ENCODE measurements at regions of chr2 and their contacts with region 1.

Region 1: DNA sequence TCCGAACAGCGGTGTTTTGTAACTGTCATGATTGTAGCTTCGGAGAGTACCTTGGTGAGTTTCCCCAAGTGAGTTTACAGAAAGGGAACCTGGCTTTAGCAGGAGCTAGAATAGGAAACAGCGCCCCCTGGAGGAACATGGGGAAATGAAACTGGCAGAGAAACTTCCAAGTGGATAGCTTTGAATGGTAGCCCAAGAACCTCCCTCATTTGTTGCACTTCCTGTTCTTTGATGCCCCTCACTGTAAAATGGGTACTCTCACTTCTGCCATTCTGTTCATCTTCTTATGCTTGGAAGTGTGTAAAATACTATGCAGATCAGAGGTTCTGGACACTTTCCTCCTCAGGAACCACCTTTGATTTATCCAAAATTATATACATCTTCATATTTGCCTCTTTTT is 36.2 kb downstream of the CHST10 start:
- DNase-seq: peak; percentile 41 to 58
- ATAC-seq: peak; percentile 54 to 75
- H3K4me3 ChIP-seq: no peak overlapping the region
- H3K27ac ChIP-seq: no peak overlapping the region
- H3K4me1 ChIP-seq: no peaks in the 10 kb centered on the region
- H3K27me3 ChIP-seq: no peaks in the 10 kb centered on the region
- CTCF ChIP-seq: peak; percentile 60 to 88 (median 78)
- POLR2A ChIP-seq: no peak

Region 2: DNA sequence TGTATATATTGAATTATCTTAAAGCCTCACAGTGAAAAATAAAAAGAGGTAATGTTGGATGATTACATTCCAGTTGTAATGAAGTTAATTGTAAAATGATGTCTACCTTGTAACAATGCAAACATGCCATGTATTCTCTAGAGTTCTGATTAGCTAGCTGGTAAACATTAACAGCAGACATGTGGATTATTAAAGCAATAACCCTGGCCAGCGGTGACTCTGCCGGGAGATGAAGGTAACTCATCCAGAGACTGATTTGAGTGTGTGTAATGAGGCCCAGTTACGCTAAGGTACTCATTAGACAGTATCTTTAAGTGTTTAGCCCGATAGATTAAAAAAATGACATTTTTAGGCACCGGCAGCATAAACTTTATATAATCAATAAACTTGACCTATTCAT is 811.9 kb before region 1 on chr2:
- in situ Hi-C with region 1: loop called in 1 of 4 experiments (anchors 10 kb)
- intact Hi-C with region 1: no loop called
- DNase-seq: no peak
- ATAC-seq: no peak
- H3K4me3 ChIP-seq: no peak overlapping the region
- H3K27ac ChIP-seq: no peak overlapping the region
- H3K4me1 ChIP-seq: peaks cover 0 to 7% of the 10 kb centered on the region in 2 donors
- H3K27me3 ChIP-seq: no peaks in the 10 kb centered on the region
- CTCF ChIP-seq: no peak
- POLR2A ChIP-seq: no peak

Region 3: DNA sequence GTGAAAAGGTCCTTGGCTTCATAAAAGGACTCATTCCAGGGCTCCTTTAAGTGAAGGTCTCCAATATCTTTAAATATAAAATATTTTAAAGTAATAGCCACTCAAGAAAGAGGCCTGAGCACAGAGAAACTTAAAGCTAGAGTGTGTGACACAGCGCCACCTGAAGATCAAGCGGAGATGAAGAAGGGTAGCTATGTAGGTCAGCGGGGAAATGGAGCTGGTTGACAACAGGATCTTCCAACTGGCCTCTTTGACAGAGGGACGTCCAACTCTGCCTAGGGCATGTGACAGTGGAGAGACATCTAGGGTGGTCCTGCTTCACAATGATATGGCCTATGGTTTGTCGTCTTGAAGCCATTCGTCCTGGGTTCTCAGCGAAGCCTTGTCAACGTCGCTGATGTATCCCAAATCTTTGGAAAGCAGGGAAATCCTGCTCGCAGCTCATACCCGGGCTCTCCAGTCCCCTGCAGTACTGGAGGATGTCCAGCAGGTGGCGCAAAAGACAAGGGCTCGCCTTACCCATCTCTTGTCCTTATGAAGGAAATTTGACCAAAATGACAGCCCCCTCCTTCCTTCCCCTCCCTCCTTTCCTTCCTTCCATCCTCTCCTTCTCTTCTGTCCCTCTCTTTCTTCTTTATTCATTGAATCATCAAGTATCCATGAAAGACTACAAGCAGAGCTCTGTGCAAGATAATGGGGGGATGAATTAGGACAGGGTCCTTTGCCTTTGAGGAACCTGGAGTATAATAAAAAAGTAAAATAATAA is 118.5 kb before region 1 on chr2:
- in situ Hi-C with region 1: loop called (anchors 5 to 10 kb)
- intact Hi-C with region 1: loop called (anchors 1 kb)
- DNase-seq: peak; percentile 20 to 58
- ATAC-seq: peak; percentile 35 to 83
- H3K4me3 ChIP-seq: no peak overlapping the region
- H3K27ac ChIP-seq: no peak overlapping the region
- H3K4me1 ChIP-seq: no peaks in the 10 kb centered on the region
- H3K27me3 ChIP-seq: no peaks in the 10 kb centered on the region
- CTCF ChIP-seq: peak; percentile 86 to 97 (median 88)
- POLR2A ChIP-seq: no peak

Region 4: GRCh38 chr2:100269889-100270288 is 111.4 kb before region 1 on chr2:
- in situ Hi-C with region 1: loop called in 3 of 4 experiments (anchors 5 to 10 kb)
- intact Hi-C with region 1: no loop called
- DNase-seq: no peak
- ATAC-seq: no peak
- H3K4me3 ChIP-seq: no peak overlapping the region
- H3K27ac ChIP-seq: no peak overlapping the region
- H3K4me1 ChIP-seq: no peaks in the 10 kb centered on the region
- H3K27me3 ChIP-seq: no peaks in the 10 kb centered on the region
- CTCF ChIP-seq: no peak
- POLR2A ChIP-seq: no peak

Region 5: DNA sequence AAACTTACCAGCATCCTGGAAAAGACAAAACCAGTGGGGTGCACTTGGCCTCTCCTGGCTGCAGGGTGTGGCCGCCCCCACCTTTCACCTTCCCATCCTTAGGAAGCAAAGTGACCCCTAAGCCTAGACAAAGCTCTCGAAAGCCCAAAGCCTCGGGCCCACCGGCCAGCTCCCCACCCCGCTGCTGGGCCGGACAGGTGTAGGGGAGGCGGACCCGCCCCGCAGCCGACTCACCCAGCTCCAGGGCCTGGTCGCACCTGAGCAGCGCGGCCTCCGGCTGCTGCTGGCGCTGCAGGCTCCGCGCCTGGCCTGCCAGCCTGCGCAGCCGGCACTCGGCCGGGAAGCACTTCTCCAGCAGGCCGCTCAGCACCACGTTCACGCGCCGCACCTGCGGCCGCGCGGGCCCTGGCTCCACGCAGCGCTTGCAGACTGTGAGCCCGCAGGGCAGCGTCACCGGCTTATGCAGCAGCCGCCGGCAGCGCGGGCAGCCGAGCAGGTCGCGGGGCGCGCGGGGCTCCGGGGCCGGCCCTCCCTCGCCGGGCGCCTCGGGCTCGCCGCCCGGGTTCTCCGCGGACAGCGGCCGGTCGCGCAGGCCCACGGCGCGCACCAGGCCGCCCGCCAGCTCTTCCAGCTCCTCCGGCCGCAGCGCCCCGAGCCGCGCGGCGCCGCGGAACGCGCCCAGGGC is 59.9 kb before region 1 on chr2:
- in situ Hi-C with region 1: no loop called
- intact Hi-C with region 1: loop called (anchors 1 kb)
- DNase-seq: peak in 1 of 2 donors; percentile 19
- ATAC-seq: peak; percentile 67 to 70
- H3K4me3 ChIP-seq: peak overlapping the region; percentile 49 to 62 (median 55)
- H3K27ac ChIP-seq: peak overlapping the region; percentile 49 to 71 (median 64)
- H3K4me1 ChIP-seq: peaks cover 6 to 7% of the 10 kb centered on the region in 2 donors
- H3K27me3 ChIP-seq: no peaks in the 10 kb centered on the region
- CTCF ChIP-seq: peak in 2 of 5 experiments; percentile 36 to 37
- POLR2A ChIP-seq: no peak